ENCODE measurements at regions of chr4 and their contacts with region 1.

Region 1: GRCh38 chr4:82721819-82722423 is 76.7 kb downstream of the SCD5 start:
- DNase-seq: no peak
- H3K4me3 ChIP-seq: no peak overlapping the region
- H3K27ac ChIP-seq: no peak overlapping the region
- H3K4me1 ChIP-seq: no peaks in the 10 kb centered on the region
- H3K27me3 ChIP-seq: no peaks in the 10 kb centered on the region
- CTCF ChIP-seq: peak in 3 of 5 experiments; percentile 15 to 27 (median 24)
- EP300 ChIP-seq: no peak
- POLR2A ChIP-seq: no peak

Region 2: DNA sequence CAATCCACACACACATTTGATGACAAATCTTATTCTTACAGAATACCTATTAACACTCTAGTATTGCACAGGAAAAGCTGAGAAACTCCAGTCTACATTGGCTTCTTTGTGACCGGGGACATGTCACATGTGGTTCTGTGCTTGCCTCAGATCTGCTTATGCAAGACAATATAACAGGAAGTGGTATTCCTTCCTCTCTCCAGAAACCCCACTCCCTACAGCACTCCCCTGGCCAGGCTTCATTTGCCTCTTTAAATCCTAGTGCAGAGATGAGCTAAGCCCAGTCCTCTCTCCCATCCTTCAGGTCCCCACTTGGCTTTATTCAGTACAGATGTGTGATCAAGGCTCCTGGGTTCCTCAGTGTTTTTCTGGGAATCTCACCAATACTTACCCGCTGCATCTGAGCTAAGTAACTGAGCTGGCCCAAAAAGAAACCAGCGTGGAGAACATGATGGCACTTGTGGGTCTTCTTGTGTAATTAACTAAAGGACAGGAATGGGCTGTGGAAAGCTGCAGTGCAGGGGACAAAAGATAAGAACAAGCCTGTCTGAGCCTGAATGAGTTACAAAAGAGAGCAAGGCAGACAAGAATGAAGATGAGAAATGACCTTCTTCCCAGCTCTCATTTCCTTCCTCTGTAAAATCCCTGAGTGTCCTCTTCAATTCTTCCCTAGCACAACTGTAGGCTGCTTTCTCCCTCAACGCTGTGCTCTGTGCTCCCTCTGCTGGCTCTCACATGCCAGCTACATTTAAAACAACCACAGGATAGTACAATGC is 453.7 kb before region 1 on chr4:
- in situ Hi-C with region 1: no loop called
- intact Hi-C with region 1: loop called (anchors 5 kb)
- DNase-seq: peak; percentile 49
- H3K4me3 ChIP-seq: no peak overlapping the region
- H3K27ac ChIP-seq: peak overlapping the region in 2 of 4 donors; percentile 3 to 16
- H3K4me1 ChIP-seq: peaks cover 0 to 10% (median 0%) of the 10 kb centered on the region in 4 donors
- H3K27me3 ChIP-seq: no peaks in the 10 kb centered on the region
- CTCF ChIP-seq: peak; percentile 43 to 63 (median 60)
- EP300 ChIP-seq: no peak
- POLR2A ChIP-seq: no peak